CD8-positive, alpha-beta memory T cell (primary cell): ENCODE measurements at regions of chr12 and their contacts with region 1.

Region 1: DNA sequence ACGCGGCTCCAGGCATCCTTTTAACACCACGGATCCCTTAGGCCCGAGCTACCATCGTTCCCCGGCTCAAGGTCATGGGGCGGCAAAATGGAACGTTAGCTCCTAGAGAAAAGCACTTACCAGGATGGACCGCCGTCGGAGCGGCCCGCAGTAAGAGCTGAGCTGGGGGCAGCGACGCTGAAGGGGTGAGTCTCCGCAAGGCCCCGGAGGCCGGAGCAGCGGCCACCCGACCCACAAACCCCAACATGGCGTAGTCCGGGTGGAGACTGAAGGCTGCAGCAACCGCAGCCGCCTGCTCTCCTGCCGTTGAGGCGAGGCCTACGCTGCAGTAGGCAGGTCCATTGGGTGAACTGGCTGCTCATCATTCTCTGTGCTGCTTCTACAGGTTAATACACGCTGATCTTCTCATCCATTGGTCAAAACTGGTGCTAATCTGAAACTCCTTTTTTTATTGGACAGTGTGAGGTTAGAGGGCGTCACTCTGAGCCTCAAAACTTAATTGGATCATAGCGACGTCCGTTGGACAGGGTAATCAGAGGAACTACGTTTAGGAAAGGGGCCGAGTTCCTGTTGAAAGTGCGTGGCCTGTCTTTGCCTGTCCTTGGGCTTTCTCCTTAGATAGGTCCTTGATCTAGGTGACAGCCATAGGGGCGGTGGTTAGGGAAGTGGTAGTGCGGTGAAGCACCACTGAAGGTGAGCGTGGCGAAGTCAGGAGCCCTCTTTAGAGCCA is at the start of gene ATP5F1B:
- DNase-seq: peak; percentile 85 to 96 (median 94)
- H3K4me3 ChIP-seq: peak within 1 kb of the TSS; percentile 100
- H3K4me3 Mint-ChIP-seq: peak within 1 kb of the TSS; percentile 79 to 99 (median 93)
- H3K27ac ChIP-seq: peak within 1 kb of the TSS; percentile 98
- H3K27ac Mint-ChIP-seq: peak within 1 kb of the TSS; percentile 76 to 100 (median 98)
- H3K4me1 ChIP-seq: peaks cover 23% of the 10 kb centered on the region
- H3K4me1 Mint-ChIP-seq: peaks cover 28 to 39% (median 39%) of the 10 kb centered on the region in 3 donors
- H3K27me3 ChIP-seq: no peaks in the 10 kb centered on the region
- H3K27me3 Mint-ChIP-seq: no peaks in the 10 kb centered on the region
- total RNA-seq, gene ATP5F1B: 925 to 960 TPM

Region 2: GRCh38 chr12:56630160-56630632 is 15.7 kb before region 1 on chr12 and contains the start of gene BAZ2A:
- CTCF ChIA-PET with region 1: interaction called, 10 read pairs
- POLR2A ChIA-PET with region 1: interaction called, 54 read pairs
- DNase-seq: peak; percentile 71 to 86 (median 80)
- H3K4me3 ChIP-seq: peak within 1 kb of the TSS; percentile 89
- H3K4me3 Mint-ChIP-seq: peak within 1 kb of the TSS; percentile 82 to 94 (median 91)
- H3K27ac ChIP-seq: peak within 1 kb of the TSS; percentile 80
- H3K27ac Mint-ChIP-seq: peak within 1 kb of the TSS; percentile 92 to 98 (median 95)
- H3K4me1 ChIP-seq: peaks cover 67% of the 10 kb centered on the region
- H3K4me1 Mint-ChIP-seq: peaks cover 72 to 76% (median 75%) of the 10 kb centered on the region in 3 donors
- H3K27me3 ChIP-seq: no peaks in the 10 kb centered on the region
- H3K27me3 Mint-ChIP-seq: peaks cover 0 to 2% of the 10 kb centered on the region in 2 donors
- total RNA-seq, gene BAZ2A: 87.3 to 89.1 TPM